Cardiac septum (tissue), 1 donor: ENCODE measurements at regions of chr2 and their contacts with region 1.

Region 1: DNA sequence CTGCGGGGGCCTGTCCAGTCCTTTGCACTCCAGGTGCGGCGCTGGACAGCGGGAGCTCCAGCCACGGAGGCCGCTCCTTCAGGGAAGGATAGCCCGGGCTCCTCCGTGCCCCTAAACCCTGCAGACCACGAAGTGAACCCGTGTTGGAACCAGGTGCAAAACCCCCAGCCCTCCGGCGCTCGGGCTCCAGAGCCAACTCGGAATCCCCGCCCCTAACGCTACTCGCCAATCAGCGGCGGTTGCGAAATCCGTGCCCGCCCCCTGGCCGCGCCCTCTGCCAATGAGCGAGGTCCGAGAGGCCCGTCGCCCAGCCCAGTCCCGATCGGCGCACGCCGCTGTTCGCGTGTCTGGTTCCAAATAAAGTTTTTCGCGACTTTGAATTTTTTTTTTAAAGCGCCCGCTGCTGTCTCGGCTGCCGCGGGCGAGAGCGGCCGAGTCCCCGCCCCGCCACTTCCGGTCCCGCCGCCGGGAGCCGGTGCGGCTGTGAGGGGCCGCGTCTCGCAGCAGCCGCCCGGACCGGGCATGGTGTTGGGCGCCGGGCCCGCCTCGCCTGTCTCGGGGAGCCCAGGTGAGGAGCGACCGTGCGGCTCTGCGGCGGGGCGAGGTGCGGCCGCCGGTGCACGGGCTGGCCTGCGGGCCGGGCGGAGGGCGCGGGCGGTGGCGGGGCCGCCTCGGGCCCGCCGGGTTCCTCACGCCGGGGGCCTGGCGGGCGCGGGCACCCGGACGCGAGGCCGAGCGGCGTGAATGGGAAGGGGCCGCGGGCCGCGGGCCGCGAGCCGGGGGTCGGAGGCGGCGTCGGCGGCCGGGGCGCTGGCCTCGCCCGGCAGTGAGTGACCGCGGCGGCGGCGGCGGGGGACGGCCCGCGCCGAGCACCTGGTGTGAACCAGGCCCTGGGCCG is at the start of gene UBE2F:
- DNase-seq: peak; percentile 99
- total RNA-seq, gene UBE2F: 61.0 TPM

Region 2: DNA sequence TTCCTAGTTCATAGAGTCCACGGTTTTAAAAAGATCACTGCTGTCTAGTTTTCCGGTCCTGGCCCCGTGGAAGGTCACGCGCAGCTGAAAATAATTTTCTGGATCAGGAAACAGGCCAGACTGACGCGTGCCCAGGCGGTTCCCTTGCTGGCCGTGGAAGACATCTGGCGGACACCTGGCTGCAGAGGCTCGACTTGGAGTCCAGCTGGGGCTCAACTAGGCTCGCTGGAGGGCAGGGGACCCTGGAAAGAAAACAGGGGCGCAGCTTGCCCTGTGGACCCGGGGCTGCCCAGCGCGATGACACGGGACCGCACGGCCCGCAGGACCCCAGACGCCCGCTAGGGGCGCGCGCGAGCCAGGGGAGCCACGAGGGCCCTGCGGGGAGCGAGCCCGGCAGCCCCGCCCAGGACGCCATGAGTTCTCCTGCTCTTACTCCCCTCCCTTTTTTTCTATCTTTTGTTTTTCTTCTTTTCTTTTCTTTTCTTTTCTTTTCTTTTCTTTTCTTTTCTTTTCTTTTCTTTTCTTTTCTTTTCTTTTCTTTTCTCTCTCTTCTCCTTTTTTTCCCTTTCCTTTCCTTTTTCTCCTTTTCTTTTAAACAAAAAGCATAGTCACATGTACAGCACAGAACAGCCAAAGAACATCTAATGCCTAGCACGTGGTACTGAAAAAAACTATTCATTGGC is 43.2 kb before region 1 on chr2:
- intact Hi-C with region 1: loop called (anchors 5 kb)
- DNase-seq: peak; percentile 92